HEK293 (cell line): ENCODE measurements at regions of chr18 and their contacts with region 1.

Region 1: DNA sequence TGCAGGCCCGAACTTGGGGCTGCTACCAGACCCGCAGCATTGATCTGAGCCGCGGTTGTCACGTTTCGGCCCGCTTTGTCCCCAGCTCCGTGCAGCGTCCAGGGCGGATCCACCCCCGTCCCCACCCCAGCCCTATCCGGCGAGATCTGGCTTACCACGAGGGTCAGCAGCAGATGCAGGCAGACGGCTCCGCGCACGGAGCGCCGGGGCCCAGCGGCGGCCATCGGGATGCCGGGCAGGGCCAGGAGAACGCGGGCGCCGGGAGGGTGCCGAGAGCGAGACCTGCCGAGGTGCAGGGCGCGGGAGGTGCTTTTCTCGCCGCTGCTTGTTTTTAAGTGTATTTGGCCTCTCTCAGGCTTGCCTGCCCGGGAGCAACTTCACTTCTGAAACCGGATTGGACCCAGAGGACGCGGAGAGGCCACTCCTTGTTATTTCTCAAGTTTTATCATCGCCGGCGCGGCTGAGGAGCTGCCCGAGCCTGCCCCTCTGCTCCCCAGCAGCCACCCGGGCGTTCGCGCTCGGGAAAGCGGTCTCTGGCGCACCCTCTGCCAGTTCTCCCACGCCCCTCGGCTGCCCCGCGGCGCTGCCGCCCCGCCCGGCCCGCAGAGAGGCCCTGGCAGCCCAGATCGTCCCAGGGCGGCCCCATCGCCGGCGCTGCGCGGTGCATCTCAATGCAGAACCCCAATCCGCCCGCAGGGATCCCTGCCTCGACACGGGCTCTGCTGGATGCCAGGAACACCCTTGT is at the start of gene DSC3:
- H3K4me3 ChIP-seq: peak within 1 kb of the TSS; percentile 79
- H3K27ac ChIP-seq: peak within 1 kb of the TSS; percentile 94
- H3K4me1 ChIP-seq: no peaks in the 10 kb centered on the region
- CTCF ChIP-seq: 0 out of 2 replicates have a peak, but pooled peaks have one; percentile 9

Region 2: GRCh38 chr18:30982285-30982992 is 60.2 kb before region 1 on chr18:
- CTCF ChIA-PET with region 1: no interaction called
- POLR2A ChIA-PET with region 1: no interaction called
- H3K4me3 ChIP-seq: no peak overlapping the region
- H3K27ac ChIP-seq: no peak overlapping the region
- H3K4me1 ChIP-seq: no peaks in the 10 kb centered on the region
- CTCF ChIP-seq: no peak

Region 3: GRCh38 chr18:31099450-31100230 is 57.0 kb after region 1 on chr18:
- CTCF ChIA-PET with region 1: no interaction called
- POLR2A ChIA-PET with region 1: interaction called, 11 read pairs
- H3K4me3 ChIP-seq: no peak overlapping the region
- H3K27ac ChIP-seq: no peak overlapping the region
- H3K4me1 ChIP-seq: peaks cover 6% of the 10 kb centered on the region
- CTCF ChIP-seq: no peak

Region 4: GRCh38 chr18:31206787-31207381 is 164.3 kb after region 1 on chr18:
- CTCF ChIA-PET with region 1: no interaction called
- POLR2A ChIA-PET with region 1: interaction called, 12 read pairs
- H3K4me3 ChIP-seq: no peak overlapping the region
- H3K27ac ChIP-seq: no peak overlapping the region
- H3K4me1 ChIP-seq: 0 out of 2 replicates have a peak, but pooled peaks cover 11% of the 10 kb centered on the region
- CTCF ChIP-seq: peak; percentile 52